A549 (cell line): ENCODE measurements at regions of chr5 and their contacts with region 1.

Region 1: DNA sequence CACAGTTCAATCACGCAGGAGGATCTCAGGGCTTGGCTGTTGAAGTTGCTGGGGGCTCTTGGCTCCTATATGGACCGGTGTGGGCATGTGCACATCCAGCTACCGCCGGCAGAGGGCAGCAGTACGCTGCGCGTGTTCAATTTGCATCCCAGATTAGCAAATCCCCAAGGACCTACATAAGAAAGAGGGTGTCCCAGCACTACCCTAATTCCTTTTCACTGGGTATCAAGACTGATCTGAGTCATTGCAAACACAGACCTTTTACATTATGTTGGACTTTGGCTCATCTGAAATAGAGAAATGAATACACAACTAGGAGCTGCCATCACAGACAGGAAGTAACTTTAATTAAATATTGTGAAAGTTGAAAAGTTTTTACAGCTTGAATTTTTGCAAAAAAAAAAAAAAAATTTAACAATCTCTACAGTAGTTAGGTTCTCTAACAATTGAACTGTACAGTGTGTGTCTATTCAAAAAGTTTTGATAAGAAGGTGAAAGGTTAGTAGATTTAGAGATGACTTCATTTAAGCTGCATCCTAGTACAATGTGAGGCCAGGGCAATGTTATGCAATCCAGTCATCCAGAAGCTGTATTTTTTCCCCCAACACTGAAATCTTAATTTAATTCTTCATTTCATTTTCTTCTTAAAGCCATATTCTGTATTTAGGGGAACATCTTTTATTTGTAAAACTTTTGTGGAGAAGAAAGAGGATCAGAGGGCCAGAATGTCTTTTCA is 404.0 kb downstream of the EBF1 start:
- DNase-seq: peak; percentile 75 to 91
- ATAC-seq: peak; percentile 96 to 97
- H3K4me3 ChIP-seq: no peak overlapping the region
- H3K27ac ChIP-seq: peak overlapping the region; percentile 60 to 71; a peak in 5 of 6 replicates
- H3K4me1 ChIP-seq: peaks cover 47% of the 10 kb centered on the region
- CTCF ChIP-seq: peak; percentile 98
- EP300 ChIP-seq: no peak; a peak in 1 of 5 replicates
- POLR2A ChIP-seq: no peak
- RAD21 ChIP-seq: peak; percentile 97 to 99

Region 2: GRCh38 chr5:158174918-158175851 is 520.6 kb before region 1 on chr5:
- CTCF ChIA-PET with region 1: interaction called, 41 read pairs
- POLR2A ChIA-PET with region 1: no interaction called
- DNase-seq: peak; percentile 59 to 63
- ATAC-seq: peak; percentile 76 to 95
- H3K4me3 ChIP-seq: no peak overlapping the region
- H3K27ac ChIP-seq: no peak overlapping the region
- H3K4me1 ChIP-seq: no peaks in the 10 kb centered on the region
- CTCF ChIP-seq: peak; percentile 67
- EP300 ChIP-seq: no peak
- POLR2A ChIP-seq: no peak
- RAD21 ChIP-seq: peak; percentile 82 to 92

Region 3: GRCh38 chr5:158718738-158719505 is 23.2 kb after region 1 on chr5:
- CTCF ChIA-PET with region 1: interaction called, 15 read pairs
- POLR2A ChIA-PET with region 1: no interaction called
- DNase-seq: no peak
- ATAC-seq: peak; percentile 66 to 71; a peak in 2 of 6 replicates
- H3K4me3 ChIP-seq: no peak overlapping the region
- H3K27ac ChIP-seq: no peak overlapping the region
- H3K4me1 ChIP-seq: peaks cover 7% of the 10 kb centered on the region; the same call in 1 of the 3 replicates
- CTCF ChIP-seq: no peak
- EP300 ChIP-seq: no peak
- POLR2A ChIP-seq: no peak
- RAD21 ChIP-seq: no peak

Region 4: GRCh38 chr5:159100025-159100781 is 404.4 kb after region 1 on chr5:
- CTCF ChIA-PET with region 1: interaction called, 461 read pairs
- POLR2A ChIA-PET with region 1: interaction called, 17 read pairs
- DNase-seq: peak; percentile 86 to 94
- ATAC-seq: peak; percentile 77 to 88
- H3K4me3 ChIP-seq: peak overlapping the region; percentile 64
- H3K27ac ChIP-seq: peak overlapping the region; percentile 86 to 93
- H3K4me1 ChIP-seq: peaks cover 18% of the 10 kb centered on the region
- CTCF ChIP-seq: no peak
- EP300 ChIP-seq: no peak
- POLR2A ChIP-seq: peak; percentile 77
- RAD21 ChIP-seq: no peak